MCF 10A (cell line): ENCODE measurements at regions of chr6 and their contacts with region 1.

Region 1: GRCh38 chr6:50655848-50656453 is 57.4 kb upstream of the TFAP2D start:
- DNase-seq: peak; percentile 32
- H3K4me3 Mint-ChIP-seq: no peak overlapping the region
- H3K27ac Mint-ChIP-seq: no peak overlapping the region
- H3K4me1 Mint-ChIP-seq: no peaks in the 10 kb centered on the region
- H3K27me3 Mint-ChIP-seq: peaks cover 11% of the 10 kb centered on the region
- CTCF ChIP-seq: peak; percentile 64

Region 2: DNA sequence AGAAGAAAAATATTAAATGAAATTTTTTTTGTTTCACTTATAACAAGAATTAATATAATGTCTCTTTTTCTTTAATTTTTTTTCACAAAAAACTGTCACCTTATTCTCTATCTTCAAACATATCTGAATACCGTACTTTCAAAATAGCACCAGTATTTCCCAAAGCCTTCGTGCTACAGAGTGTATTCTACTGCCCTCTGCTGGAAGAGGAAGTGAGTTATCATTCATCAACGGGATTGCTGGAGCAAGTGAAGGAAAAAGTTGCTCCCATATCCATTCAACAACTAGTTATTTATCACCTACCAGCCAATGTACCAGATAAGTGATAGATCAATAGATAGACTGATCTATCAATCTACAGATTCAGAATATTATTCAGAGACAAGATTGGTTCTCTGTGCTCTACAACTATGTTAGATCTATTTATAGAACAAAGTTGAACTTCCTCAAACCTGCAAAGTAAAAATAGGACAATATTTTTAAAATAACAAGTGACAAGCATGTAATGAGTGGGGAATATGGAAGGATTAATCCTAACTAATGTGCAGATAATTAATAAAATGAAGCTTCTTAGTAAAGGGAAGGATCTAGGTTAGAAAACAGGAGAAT is 136.1 kb after region 1 on chr6:
- CTCF ChIA-PET with region 1: interaction called, 18 read pairs
- POLR2A ChIA-PET with region 1: no interaction called
- intact Hi-C with region 1: loop called (anchors 1 kb)
- DNase-seq: peak; percentile 68
- H3K4me3 Mint-ChIP-seq: no peak overlapping the region
- H3K27ac Mint-ChIP-seq: no peak overlapping the region
- H3K4me1 Mint-ChIP-seq: no peaks in the 10 kb centered on the region
- H3K27me3 Mint-ChIP-seq: peaks cover 25% of the 10 kb centered on the region
- CTCF ChIP-seq: peak; percentile 72

Region 3: DNA sequence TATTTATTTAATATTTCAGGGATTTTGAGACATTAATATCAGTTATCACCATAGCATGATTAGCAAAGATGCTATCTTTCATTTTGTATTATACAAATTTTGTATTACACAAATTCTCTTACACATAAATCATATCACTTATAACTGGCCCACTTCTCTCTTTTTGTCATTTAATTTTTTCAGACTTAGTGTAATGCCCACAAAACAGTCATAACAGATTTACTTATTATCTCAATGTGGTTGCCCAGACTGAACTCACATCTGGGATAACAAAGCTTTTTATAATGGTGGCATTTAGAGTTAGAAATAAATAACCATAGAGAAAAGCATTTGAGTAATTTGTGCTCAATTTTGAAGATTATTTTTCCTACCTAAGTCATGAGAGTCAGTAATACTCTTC is 311.0 kb after region 1 on chr6:
- CTCF ChIA-PET with region 1: no interaction called
- POLR2A ChIA-PET with region 1: no interaction called
- intact Hi-C with region 1: no loop called
- DNase-seq: no peak
- H3K4me3 Mint-ChIP-seq: no peak overlapping the region
- H3K27ac Mint-ChIP-seq: no peak overlapping the region
- H3K4me1 Mint-ChIP-seq: no peaks in the 10 kb centered on the region
- H3K27me3 Mint-ChIP-seq: no peaks in the 10 kb centered on the region
- CTCF ChIP-seq: no peak

Region 4: DNA sequence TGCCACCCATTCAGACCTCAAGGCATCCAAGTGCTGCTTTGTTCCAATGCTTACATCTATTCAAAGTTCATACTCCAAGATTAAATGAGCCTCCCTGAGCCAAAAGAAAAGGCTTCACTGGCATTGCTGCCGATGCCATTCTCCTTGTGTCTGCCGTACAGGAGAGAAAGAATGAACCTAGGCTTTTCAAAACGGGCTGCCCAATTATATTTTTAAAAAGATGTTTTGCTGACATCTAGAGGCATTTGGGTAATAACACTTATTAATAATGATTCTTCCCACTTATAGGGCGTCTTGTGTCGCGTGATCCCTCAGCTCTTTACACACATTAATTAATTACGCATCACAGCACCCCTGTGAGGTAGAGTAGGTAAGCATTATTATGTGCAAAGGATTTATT is 885.9 kb after region 1 on chr6:
- CTCF ChIA-PET with region 1: interaction called, 4 read pairs
- POLR2A ChIA-PET with region 1: no interaction called
- intact Hi-C with region 1: loop called (anchors 5 kb)
- DNase-seq: peak; percentile 36
- H3K4me3 Mint-ChIP-seq: no peak overlapping the region
- H3K27ac Mint-ChIP-seq: no peak overlapping the region
- H3K4me1 Mint-ChIP-seq: peaks cover 7% of the 10 kb centered on the region
- H3K27me3 Mint-ChIP-seq: peaks cover 16% of the 10 kb centered on the region
- CTCF ChIP-seq: peak; percentile 48

Region 5: GRCh38 chr6:52020945-52021570 is 1365.1 kb after region 1 on chr6:
- CTCF ChIA-PET with region 1: interaction called, 4 read pairs
- POLR2A ChIA-PET with region 1: no interaction called
- intact Hi-C with region 1: loop called (anchors 5 kb)
- DNase-seq: peak; percentile 45
- H3K4me3 Mint-ChIP-seq: no peak overlapping the region
- H3K27ac Mint-ChIP-seq: no peak overlapping the region
- H3K4me1 Mint-ChIP-seq: no peaks in the 10 kb centered on the region
- H3K27me3 Mint-ChIP-seq: peaks cover 20% of the 10 kb centered on the region
- CTCF ChIP-seq: peak; percentile 53